Activated naive CD4-positive, alpha-beta T cell treated with anti-CD3 and anti-CD28 coated beads for 36 hours (primary cell): ENCODE measurements at regions of chr6 and their contacts with region 1.

Region 1: DNA sequence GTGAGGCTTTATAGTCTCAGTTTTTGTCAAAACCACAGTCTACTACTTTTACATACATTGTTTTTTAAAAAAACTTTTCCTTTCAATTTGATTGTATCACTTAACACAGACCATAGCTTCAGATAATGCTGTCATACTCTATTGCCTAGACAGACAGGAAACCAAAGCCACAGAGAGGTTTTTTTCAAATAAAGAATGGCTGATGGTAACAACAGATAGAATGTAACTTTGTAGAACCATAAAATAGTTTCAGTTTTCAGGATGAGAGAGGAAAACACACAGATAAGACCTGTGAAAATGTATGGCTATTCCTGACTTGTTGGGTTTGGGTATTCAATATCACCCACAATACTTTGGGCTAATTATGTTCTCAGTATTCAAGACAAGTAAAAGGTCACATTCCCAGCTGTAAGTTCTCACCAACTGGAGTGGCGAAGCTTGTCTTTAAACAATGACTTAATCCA is 94.0 kb downstream of the ADGRG6 start:
- DNase-seq: no peak
- H3K4me3 Mint-ChIP-seq: no peak overlapping the region
- H3K27ac Mint-ChIP-seq: no peak overlapping the region
- H3K4me1 Mint-ChIP-seq: peaks cover 33% of the 10 kb centered on the region
- H3K27me3 Mint-ChIP-seq: no peaks in the 10 kb centered on the region

Region 2: DNA sequence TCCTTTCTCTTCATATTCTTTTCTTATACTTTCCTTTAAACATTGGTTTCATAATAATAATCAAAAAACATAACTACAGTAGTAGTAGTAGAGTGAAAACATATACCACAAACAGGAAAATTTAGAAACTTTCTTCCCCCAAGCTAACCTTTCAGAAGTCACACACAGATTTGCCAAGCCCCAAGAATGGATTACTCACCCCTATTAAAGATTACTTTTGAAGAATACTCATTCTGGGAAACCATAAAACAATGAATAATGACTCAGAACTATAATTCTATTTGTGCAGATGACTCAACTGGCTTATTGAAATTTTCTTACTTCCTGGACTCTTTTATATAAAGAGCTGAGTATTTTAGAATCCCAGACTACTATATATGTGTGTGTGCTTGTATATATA is 382.5 kb before region 1 on chr6:
- CTCF ChIA-PET with region 1: no interaction called
- intact Hi-C with region 1: loop called (anchors 1 kb)
- DNase-seq: no peak
- H3K4me3 Mint-ChIP-seq: no peak overlapping the region
- H3K27ac Mint-ChIP-seq: no peak overlapping the region
- H3K4me1 Mint-ChIP-seq: peaks cover 14% of the 10 kb centered on the region
- H3K27me3 Mint-ChIP-seq: peaks cover 27% of the 10 kb centered on the region

Region 3: DNA sequence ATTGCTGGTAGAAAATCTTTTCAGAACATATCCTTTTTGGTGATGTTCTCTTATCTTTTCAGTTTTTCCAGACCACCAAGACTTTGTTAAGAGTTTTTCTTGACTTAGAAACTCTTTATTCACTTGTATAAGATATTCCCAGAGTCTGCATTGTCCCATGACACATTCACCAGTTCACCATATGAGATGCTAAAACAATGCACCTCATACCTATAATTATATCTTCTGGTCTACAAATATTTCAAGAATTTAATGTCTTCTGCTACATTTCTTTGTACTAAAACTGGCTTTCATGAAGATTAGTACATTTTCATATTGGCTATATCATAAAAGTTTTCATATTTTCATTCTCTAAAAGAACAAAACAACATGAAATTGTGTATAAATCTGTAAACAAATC is 17.3 kb after region 1 on chr6:
- CTCF ChIA-PET with region 1: interaction called, 3 read pairs
- intact Hi-C with region 1: loop called (anchors 1 kb)
- DNase-seq: no peak
- H3K4me3 Mint-ChIP-seq: no peak overlapping the region
- H3K27ac Mint-ChIP-seq: no peak overlapping the region
- H3K4me1 Mint-ChIP-seq: peaks cover 35% of the 10 kb centered on the region
- H3K27me3 Mint-ChIP-seq: no peaks in the 10 kb centered on the region

Region 4: DNA sequence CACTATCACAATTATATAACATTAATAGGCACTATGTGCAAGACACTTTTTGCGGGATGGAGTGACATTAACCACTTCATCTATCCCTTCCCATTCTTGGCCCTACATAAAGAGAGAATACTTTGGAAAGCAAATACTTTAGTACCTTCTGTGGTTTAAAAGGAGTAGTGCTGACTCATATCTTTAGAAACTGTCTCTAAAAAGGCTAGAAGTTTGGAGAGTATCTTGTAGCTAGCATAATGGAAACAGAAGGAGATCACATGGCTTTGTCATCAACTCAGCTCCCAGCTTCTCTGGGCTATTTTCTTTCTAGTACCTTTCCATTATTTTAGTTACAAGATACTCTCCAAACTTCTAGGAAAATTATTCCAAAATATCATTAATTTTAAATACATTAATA is 63.5 kb after region 1 on chr6:
- CTCF ChIA-PET with region 1: no interaction called
- intact Hi-C with region 1: no loop called
- DNase-seq: no peak
- H3K4me3 Mint-ChIP-seq: no peak overlapping the region
- H3K27ac Mint-ChIP-seq: no peak overlapping the region
- H3K4me1 Mint-ChIP-seq: peaks cover 8% of the 10 kb centered on the region
- H3K27me3 Mint-ChIP-seq: no peaks in the 10 kb centered on the region

Region 5: DNA sequence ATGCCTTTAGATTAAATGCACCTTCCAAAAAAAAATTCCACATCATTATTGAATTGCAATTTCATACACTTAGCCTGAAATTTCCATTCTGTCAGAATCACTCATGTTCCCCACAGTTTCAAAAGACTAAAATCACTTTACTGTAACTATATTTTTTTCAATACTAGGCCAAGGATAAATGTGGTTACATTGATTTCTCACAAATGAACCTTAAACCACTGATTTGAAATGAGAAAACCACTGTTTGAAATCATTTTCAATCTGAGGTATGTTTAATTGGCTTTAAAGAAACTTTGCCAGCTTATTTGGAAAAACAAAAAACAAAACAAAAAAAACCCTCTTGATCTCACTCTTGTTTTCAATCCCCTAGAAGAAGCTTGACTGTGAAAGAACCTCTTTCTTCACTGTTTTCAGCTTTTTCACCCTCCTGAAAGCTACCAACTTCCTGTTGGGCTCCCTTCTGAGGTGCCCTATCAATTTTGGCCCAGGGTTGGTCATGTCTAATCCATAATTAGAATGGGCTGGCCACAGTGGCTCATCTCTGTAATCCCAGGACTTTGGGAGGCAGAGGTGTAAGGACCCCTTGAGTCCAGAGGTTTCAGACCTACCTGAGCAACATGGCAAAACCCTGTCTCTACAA is 148.5 kb after region 1 on chr6:
- CTCF ChIA-PET with region 1: no interaction called
- intact Hi-C with region 1: loop called (anchors 1 kb)
- DNase-seq: peak; percentile 29
- H3K4me3 Mint-ChIP-seq: no peak overlapping the region
- H3K27ac Mint-ChIP-seq: peak overlapping the region; percentile 68
- H3K4me1 Mint-ChIP-seq: peaks cover 46% of the 10 kb centered on the region
- H3K27me3 Mint-ChIP-seq: no peaks in the 10 kb centered on the region

Region 6: GRCh38 chr6:143441680-143442545 is 1046.1 kb after region 1 on chr6:
- CTCF ChIA-PET with region 1: no interaction called
- intact Hi-C with region 1: loop called (anchors 5 kb)
- DNase-seq: peak; percentile 38
- H3K4me3 Mint-ChIP-seq: no peak overlapping the region
- H3K27ac Mint-ChIP-seq: no peak overlapping the region
- H3K4me1 Mint-ChIP-seq: peaks cover 46% of the 10 kb centered on the region
- H3K27me3 Mint-ChIP-seq: no peaks in the 10 kb centered on the region